CD4-positive, alpha-beta memory T cell (primary cell): ENCODE measurements at regions of chr10 and their contacts with region 1.

Region 1: GRCh38 chr10:91006001-91006751 is 85.3 kb upstream of the ANKRD1 start:
- DNase-seq: peak; percentile 60 to 73 (median 67)
- H3K4me3 ChIP-seq: no peak overlapping the region
- H3K4me3 Mint-ChIP-seq: peak overlapping the region; percentile 40 to 89 (median 73)
- H3K27ac ChIP-seq: no peak overlapping the region
- H3K27ac Mint-ChIP-seq: peak overlapping the region; percentile 30 to 88 (median 74)
- H3K4me1 ChIP-seq: peaks cover 18% of the 10 kb centered on the region
- H3K4me1 Mint-ChIP-seq: peaks cover 11 to 21% (median 16%) of the 10 kb centered on the region in 4 donors
- H3K27me3 ChIP-seq: no peaks in the 10 kb centered on the region
- H3K27me3 Mint-ChIP-seq: peaks cover 0 to under 1% of the 10 kb centered on the region in 2 donors

Region 2: GRCh38 chr10:91017198-91017597 is 11.0 kb after region 1 on chr10:
- CTCF ChIA-PET with region 1: interaction called, 25 read pairs
- POLR2A ChIA-PET with region 1: interaction called, 3 read pairs
- intact Hi-C with region 1: no loop called
- DNase-seq: no peak
- H3K4me3 ChIP-seq: no peak overlapping the region
- H3K4me3 Mint-ChIP-seq: no peak overlapping the region
- H3K27ac ChIP-seq: no peak overlapping the region
- H3K27ac Mint-ChIP-seq: no peak overlapping the region
- H3K4me1 ChIP-seq: no peaks in the 10 kb centered on the region
- H3K4me1 Mint-ChIP-seq: no peaks in the 10 kb centered on the region
- H3K27me3 ChIP-seq: no peaks in the 10 kb centered on the region
- H3K27me3 Mint-ChIP-seq: peaks cover 8 to 15% of the 10 kb centered on the region in 2 donors

Region 3: GRCh38 chr10:91242940-91243339 is 236.8 kb after region 1 on chr10:
- CTCF ChIA-PET with region 1: interaction called, 324 read pairs
- POLR2A ChIA-PET with region 1: no interaction called
- intact Hi-C with region 1: no loop called
- DNase-seq: no peak
- H3K4me3 ChIP-seq: no peak overlapping the region
- H3K4me3 Mint-ChIP-seq: peak overlapping the region in 2 of 8 donors; percentile 0 to 9
- H3K27ac ChIP-seq: peak overlapping the region; percentile 1
- H3K27ac Mint-ChIP-seq: peak overlapping the region in 6 of 7 donors; percentile 23 to 91 (median 49)
- H3K4me1 ChIP-seq: peaks cover 49% of the 10 kb centered on the region
- H3K4me1 Mint-ChIP-seq: peaks cover 21 to 30% (median 28%) of the 10 kb centered on the region in 4 donors
- H3K27me3 ChIP-seq: no peaks in the 10 kb centered on the region
- H3K27me3 Mint-ChIP-seq: no peaks in the 10 kb centered on the region

Region 4: DNA sequence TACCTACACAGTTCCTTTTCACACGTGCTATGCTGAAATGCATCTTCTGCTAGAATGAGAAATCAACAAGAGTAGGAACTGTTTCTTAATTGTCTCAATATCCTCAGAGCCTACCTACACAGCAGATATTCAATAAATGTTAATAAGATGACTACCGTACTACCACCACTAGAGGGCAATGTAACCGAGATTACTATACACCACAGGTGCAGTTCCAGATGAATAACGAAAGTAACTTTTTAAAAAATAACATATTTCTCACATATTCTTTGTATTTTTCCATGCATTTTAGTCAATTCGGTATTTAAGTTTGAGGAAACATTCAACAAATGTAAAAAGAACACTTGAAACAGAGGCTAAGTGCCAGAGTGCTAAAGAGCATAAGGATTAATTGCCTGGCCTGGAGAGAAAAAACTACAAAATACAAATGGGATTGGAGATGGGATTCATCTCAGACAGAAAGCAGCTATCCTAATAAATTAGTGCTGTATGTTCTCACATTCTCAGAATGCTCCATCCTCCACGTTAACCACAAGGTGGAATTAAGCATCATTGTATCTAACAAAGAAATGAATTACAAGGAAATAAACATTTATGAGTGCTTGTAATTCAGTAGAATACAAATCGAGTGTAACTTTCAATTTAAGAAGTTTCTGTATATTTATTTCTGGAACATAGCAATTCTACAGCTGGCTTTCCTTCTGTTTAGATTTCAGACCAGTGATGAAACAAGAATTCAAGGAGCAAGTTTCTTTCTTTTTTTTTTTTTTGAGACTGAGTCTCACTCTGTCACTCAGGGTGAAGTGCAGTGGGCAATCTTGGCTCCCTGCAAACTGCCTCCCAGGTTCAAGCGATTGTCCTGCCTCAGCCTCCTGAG is 383.7 kb after region 1 on chr10:
- CTCF ChIA-PET with region 1: interaction called, 3 read pairs
- POLR2A ChIA-PET with region 1: no interaction called
- intact Hi-C with region 1: loop called (anchors 5 kb)
- DNase-seq: peak; percentile 45 to 74 (median 69)
- H3K4me3 ChIP-seq: no peak overlapping the region
- H3K4me3 Mint-ChIP-seq: peak overlapping the region in 3 of 8 donors; percentile 9 to 55 (median 30)
- H3K27ac ChIP-seq: no peak overlapping the region
- H3K27ac Mint-ChIP-seq: no peak overlapping the region
- H3K4me1 ChIP-seq: peaks cover 4% of the 10 kb centered on the region
- H3K4me1 Mint-ChIP-seq: peaks cover 4 to 10% (median 5%) of the 10 kb centered on the region in 4 donors
- H3K27me3 ChIP-seq: no peaks in the 10 kb centered on the region
- H3K27me3 Mint-ChIP-seq: peaks cover 8 to 19% of the 10 kb centered on the region in 2 donors

Region 5: DNA sequence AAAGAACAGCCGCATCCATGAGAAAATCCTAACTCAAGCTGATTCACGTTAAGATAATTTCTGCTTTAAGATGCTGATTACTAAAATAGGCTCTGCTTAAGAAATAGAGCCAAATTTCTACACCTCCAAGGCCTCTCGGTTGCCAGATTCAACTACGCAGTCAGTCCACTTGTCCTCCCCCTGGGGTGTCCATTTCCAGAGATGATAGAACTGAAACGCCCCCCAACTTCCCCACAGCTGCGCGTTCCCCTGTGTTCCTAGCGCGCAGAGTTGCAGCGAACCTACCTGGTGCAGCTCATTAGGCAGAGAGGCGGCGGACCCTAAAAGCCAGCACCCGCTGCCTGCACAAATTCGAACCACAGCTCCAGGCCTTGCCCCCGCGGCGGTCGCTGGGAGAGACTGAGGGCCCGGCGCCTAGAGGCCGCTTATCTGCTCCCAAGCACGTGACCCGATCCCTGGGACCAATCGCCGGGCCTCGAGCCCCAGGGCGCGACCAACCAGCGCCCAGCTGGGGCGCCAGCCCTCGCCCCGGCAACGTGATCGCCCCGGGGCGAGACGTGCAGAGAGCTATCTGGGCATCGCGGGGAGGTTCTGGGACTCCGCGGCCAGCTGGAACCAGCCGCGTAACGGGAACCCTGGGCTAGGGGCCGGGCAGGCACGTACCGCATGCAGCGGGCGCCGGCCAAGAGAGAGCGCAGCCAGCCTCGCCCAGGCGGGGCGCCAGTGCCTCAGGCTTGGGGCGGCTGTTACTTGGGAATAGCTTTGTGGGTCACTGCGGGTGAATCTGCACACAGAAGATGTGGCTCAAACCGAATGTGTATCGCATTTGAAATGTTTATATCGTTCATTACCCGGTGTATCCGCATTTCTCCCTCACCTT is 626.7 kb after region 1 on chr10 and contains the start of gene PPP1R3C:
- CTCF ChIA-PET with region 1: interaction called, 7 read pairs
- POLR2A ChIA-PET with region 1: no interaction called
- intact Hi-C with region 1: loop called (anchors 1 kb)
- DNase-seq: peak; percentile 9 to 42 (median 15)
- H3K4me3 ChIP-seq: peak within 1 kb of the TSS in 1 of 2 donors; percentile 12
- H3K4me3 Mint-ChIP-seq: peak within 1 kb of the TSS; percentile 44 to 75 (median 68)
- H3K27ac ChIP-seq: no peak within 1 kb of the TSS
- H3K27ac Mint-ChIP-seq: no peak within 1 kb of the TSS
- H3K4me1 ChIP-seq: peaks cover 4% of the 10 kb centered on the region
- H3K4me1 Mint-ChIP-seq: peaks cover 0 to 8% (median 5%) of the 10 kb centered on the region in 4 donors
- H3K27me3 ChIP-seq: peaks cover 25% of the 10 kb centered on the region
- H3K27me3 Mint-ChIP-seq: peaks cover 44 to 47% of the 10 kb centered on the region in 2 donors
- total RNA-seq, gene PPP1R3C: not detected